ENCODE measurements at regions of chr11 and their contacts with region 1.

Region 1: GRCh38 chr11:111841370-111842053 is 29.9 kb downstream of the ALG9 start:
- DNase-seq: peak; percentile 79 to 98 (median 92)
- H3K4me3 ChIP-seq: no peak overlapping the region
- H3K27ac ChIP-seq: no peak overlapping the region
- H3K4me1 ChIP-seq: peaks cover 0 to 5% of the 10 kb centered on the region in 2 donors
- H3K27me3 ChIP-seq: no peaks in the 10 kb centered on the region
- CTCF ChIP-seq: peak; percentile 90 to 96 (median 94)
- POLR2A ChIP-seq: no peak

Region 2: GRCh38 chr11:111565114-111565720 is 276.3 kb before region 1 on chr11:
- intact Hi-C with region 1: loop called in 1 of 2 experiments (anchors 10 kb)
- DNase-seq: peak; percentile 59 to 90 (median 65)
- H3K4me3 ChIP-seq: no peak overlapping the region
- H3K27ac ChIP-seq: no peak overlapping the region
- H3K4me1 ChIP-seq: no peaks in the 10 kb centered on the region
- H3K27me3 ChIP-seq: no peaks in the 10 kb centered on the region
- CTCF ChIP-seq: peak; percentile 78 to 93 (median 82)
- POLR2A ChIP-seq: no peak

Region 3: DNA sequence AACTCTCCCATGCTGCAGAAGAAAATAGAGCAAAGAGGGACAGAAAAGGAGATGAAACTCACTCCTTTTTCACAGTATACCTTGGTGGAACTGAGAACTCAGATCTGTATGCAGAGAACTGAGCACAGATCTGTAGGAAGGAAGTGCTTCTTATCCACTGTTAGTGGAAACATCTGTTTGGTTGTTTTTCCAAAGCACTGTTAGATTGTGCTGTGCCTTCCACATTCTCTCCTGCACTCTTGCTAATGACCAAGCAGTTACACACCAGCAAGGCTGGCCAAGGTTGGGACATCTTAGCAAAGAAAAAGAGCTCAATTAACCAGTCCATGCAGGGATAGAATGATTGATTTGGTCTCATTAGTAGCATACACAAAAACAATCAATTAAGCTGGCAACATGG is 259.3 kb before region 1 on chr11:
- intact Hi-C with region 1: loop called in 1 of 2 experiments (anchors 5 kb)
- DNase-seq: no peak
- H3K4me3 ChIP-seq: no peak overlapping the region
- H3K27ac ChIP-seq: no peak overlapping the region
- H3K4me1 ChIP-seq: no peaks in the 10 kb centered on the region
- H3K27me3 ChIP-seq: no peaks in the 10 kb centered on the region
- CTCF ChIP-seq: no peak
- POLR2A ChIP-seq: no peak

Region 4: GRCh38 chr11:111601979-111602864 is 239.3 kb before region 1 on chr11 and contains the start of gene SIK2:
- intact Hi-C with region 1: loop called in 1 of 2 experiments (anchors 10 kb)
- DNase-seq: peak; percentile 95 to 97 (median 96)
- H3K4me3 ChIP-seq: peak within 1 kb of the TSS; percentile 39 to 99 (median 78)
- H3K27ac ChIP-seq: peak within 1 kb of the TSS; percentile 81 to 99 (median 98)
- H3K4me1 ChIP-seq: peaks cover 17 to 41% of the 10 kb centered on the region in 2 donors
- H3K27me3 ChIP-seq: no peaks in the 10 kb centered on the region
- CTCF ChIP-seq: peak; percentile 67 to 99 (median 92)
- POLR2A ChIP-seq: peak; percentile 42 to 70
- total RNA-seq, gene SIK2: 16.2 to 33.0 (median 27.8) TPM

Region 5: DNA sequence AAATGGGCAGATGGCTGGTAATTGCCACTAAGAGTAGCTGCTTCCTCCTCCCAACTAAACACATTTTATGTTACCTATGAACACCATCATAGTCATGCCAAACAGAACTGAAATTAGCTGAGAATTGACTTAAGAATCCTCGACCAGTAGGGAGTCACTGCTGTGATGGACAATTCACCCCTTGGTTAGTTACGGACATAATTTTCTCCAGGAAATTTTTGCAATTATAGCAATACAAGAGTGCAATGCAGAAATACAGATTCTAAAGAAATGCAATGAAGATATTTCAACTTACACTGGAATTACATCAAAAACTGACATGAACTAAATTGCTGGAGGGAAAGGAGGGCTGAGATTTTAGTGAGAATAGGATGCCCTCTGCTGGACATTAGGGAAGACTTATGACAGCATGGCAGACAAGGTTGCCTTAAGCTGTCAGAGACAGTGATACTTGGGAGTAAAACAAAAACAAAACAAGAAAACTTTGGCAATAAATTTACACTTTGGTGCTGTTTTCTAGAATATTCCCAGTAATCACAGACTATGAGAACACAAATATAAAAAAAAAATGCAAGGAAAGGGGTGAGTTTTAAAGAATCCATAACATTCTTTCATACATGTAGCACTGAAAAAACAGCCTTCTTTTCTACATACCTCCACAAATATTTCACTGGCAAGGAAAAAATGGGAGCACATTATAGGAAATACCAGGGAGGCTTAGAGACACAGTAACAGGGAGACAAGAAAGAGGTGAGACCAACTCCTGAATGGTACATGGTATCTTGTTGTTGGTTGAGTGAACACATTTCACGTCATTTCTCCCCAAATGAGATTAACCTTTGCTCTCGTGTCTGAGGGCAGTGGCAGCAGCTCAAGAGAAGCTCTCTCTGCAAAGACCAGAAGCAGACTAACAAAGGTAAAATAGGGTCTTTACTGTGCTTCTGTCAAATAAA is 64.1 kb before region 1 on chr11:
- intact Hi-C with region 1: loop called in 1 of 2 experiments (anchors 10 kb)
- DNase-seq: peak in 5 of 7 donors; percentile 21 to 49 (median 38)
- H3K4me3 ChIP-seq: no peak overlapping the region
- H3K27ac ChIP-seq: peak overlapping the region in 3 of 5 donors; percentile 32 to 73 (median 43)
- H3K4me1 ChIP-seq: peaks cover 4 to 17% of the 10 kb centered on the region in 2 donors
- H3K27me3 ChIP-seq: no peaks in the 10 kb centered on the region
- CTCF ChIP-seq: peak; percentile 58 to 94 (median 87)
- POLR2A ChIP-seq: no peak